ENCODE measurements at regions of chr17 and their contacts with region 1.

Region 1: DNA sequence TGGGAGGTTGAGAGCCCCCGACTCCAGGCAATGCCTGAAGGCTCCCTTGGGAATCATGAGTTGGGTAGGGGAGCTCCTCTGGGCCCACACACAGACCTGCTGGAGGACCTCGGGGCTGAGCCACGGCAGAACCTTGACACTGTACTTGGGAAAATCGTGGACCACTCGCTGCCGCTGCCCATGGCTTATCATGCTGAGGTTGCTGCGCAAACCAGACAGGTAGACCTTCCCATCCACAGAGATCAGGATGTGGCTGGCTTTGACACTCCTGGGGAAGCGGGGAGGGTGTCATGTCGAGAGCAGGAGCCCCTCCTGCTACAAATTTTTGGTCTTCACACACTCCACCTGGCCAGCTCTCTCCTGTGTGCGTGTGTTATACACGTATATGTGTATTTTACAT is 7.2 kb upstream of the LIMD2 start:
- DNase-seq: peak in 6 of 9 experiments; percentile 36 to 76 (median 64)
- ATAC-seq: peak; percentile 58
- H3K4me3 ChIP-seq: peak overlapping the region; percentile 10 to 42
- H3K4me3 Mint-ChIP-seq: peak overlapping the region; percentile 78
- H3K27ac ChIP-seq: peak overlapping the region; percentile 67 to 73
- H3K27ac Mint-ChIP-seq: peak overlapping the region; percentile 94
- H3K4me1 ChIP-seq: peaks cover 85% of the 10 kb centered on the region
- H3K4me1 Mint-ChIP-seq: peaks cover 83% of the 10 kb centered on the region
- H3K27me3 ChIP-seq: no peaks in the 10 kb centered on the region
- H3K27me3 Mint-ChIP-seq: no peaks in the 10 kb centered on the region
- CTCF ChIP-seq: no peak

Region 2: DNA sequence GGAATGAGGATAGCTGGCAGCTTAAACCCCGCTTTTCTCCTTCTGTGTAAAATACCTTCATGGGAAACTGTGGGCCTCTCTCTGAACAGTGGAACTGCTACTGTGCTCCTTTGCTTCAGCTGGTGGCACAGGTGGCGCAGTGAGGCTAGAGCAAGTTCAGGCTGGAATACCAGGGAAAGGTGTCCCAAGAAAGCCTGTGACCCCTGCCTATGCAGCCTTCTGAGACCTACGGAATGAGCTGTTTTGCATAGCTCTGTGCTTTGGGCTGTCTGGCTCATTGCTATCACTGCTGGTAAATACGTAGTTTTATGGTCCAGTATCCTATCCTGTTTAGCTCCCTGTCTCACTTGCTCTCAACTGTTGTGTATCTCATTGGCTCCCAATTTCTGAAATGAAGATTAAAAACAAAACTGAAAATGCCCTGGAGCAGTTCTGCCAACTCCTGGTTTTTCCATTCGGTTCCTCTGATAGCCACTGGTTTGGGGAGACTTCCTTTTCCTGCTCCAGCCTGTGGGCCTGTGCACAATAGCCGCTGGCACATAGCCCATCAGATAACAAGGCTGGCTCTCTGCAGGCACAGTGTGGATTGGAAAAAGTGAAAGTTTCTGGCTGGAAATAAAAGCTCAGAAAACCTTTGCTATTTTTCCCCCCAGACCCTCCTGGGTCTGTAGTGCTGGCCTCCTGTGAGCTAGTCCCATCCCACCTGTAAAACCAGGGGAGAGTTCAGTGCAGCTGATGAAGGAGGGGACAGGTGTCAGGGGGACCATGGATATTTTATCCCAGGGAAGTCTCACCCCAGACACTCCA is 31.3 kb before region 1 on chr17:
- CTCF ChIA-PET with region 1: interaction called, 18 read pairs
- POLR2A ChIA-PET with region 1: interaction called, 3 read pairs
- intact Hi-C with region 1: no loop called
- DNase-seq: no peak
- ATAC-seq: no peak
- H3K4me3 ChIP-seq: no peak overlapping the region
- H3K4me3 Mint-ChIP-seq: no peak overlapping the region
- H3K27ac ChIP-seq: no peak overlapping the region
- H3K27ac Mint-ChIP-seq: peak overlapping the region; percentile 32
- H3K4me1 ChIP-seq: no peaks in the 10 kb centered on the region
- H3K4me1 Mint-ChIP-seq: peaks cover 19% of the 10 kb centered on the region
- H3K27me3 ChIP-seq: no peaks in the 10 kb centered on the region
- H3K27me3 Mint-ChIP-seq: no peaks in the 10 kb centered on the region
- CTCF ChIP-seq: no peak

Region 3: GRCh38 chr17:63722403-63722802 is 15.3 kb after region 1 on chr17:
- CTCF ChIA-PET with region 1: interaction called, 13 read pairs
- POLR2A ChIA-PET with region 1: interaction called, 10 read pairs
- intact Hi-C with region 1: no loop called
- DNase-seq: no peak
- ATAC-seq: no peak
- H3K4me3 ChIP-seq: no peak overlapping the region
- H3K4me3 Mint-ChIP-seq: no peak overlapping the region
- H3K27ac ChIP-seq: no peak overlapping the region
- H3K27ac Mint-ChIP-seq: no peak overlapping the region
- H3K4me1 ChIP-seq: no peaks in the 10 kb centered on the region
- H3K4me1 Mint-ChIP-seq: no peaks in the 10 kb centered on the region
- H3K27me3 ChIP-seq: no peaks in the 10 kb centered on the region
- H3K27me3 Mint-ChIP-seq: no peaks in the 10 kb centered on the region
- CTCF ChIP-seq: no peak